ENCODE measurements at regions of chr6 and their contacts with region 1.

Region 1: DNA sequence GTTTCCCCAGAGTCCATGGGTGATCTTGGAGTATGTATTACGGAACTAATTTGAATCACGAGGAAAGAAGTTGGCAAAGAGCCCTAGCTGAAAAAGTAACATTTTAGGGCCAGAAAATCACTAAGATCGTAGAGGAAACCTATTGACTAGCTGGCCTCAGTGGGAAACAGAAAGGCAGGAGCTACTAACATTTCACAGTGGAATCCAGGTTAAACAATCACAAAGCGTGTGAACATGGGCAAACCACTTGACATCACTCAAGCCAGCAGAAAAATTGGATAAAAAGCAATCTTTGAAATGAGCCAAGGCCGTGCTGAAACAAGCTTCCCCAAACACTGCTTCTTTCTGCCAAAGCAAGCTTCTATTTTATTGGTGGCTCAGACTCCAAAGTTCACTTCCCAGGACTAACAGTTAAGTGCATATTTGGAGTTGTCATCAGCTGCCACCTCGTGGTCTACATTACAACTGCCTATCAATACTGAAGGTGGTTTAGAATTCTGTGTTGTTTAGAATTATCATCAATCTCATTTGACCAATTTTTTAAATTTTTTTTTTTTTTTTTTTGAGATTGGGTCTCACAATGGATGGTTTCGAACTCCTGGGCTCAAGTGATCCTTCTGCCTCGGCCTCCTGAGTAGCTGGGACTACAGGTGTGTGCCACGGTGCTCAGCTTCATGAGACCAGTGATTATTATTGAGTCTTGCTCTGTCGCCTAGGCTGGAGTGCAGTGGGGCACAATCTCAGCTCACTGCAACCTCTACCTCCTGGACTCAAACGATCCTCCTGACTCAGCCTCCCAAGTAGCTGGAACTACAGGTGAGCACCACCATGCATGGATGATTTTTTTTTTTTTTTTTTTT is 10.6 kb downstream of the RPS10 start:
- DNase-seq: peak; percentile 62
- ATAC-seq: peak; percentile 71
- H3K4me3 Mint-ChIP-seq: no peak overlapping the region
- H3K27ac Mint-ChIP-seq: no peak overlapping the region
- H3K4me1 Mint-ChIP-seq: peaks cover 15% of the 10 kb centered on the region
- H3K27me3 Mint-ChIP-seq: no peaks in the 10 kb centered on the region

Region 2: DNA sequence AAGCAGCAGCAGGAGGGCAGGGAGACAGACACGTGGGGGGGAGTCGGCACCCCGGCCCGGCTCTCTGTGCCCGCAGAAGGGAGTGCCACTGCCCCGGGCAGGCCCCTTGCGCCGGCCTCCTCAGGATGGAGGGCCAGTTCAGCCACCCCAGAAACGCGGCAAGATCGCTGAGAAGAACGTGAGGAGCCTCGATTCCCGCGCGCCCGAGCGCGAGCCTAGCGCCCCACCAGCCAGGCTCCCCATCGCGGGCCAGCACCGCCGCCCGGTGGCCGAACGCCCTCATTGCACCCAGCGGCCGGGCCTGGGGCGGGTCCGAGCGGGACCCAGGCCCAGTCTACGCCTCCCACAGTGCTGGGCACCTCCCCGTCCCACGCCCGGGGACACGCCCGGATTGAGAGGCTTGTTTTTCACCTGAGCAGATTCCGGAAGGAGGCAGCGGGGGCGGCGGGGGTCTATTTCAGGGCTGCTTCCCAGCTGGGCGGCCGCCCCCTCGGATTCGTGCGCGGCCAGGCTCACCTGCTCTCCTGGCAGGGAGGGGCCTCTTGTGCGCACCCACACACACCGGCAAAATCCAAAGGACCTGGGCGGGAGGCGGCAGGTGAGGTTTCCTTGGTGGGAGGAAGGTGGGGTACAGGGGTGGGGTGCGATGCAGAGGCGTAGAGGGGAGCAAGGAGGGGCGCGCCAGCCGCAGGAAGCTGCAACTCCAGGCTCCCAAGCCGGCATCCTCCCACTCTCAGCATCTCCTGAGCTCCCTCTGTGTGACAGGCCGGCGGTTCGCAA is 260.4 kb before region 1 on chr6:
- CTCF ChIA-PET with region 1: interaction called, 11 read pairs
- DNase-seq: peak; percentile 67
- ATAC-seq: peak; percentile 85
- H3K4me3 Mint-ChIP-seq: no peak overlapping the region
- H3K27ac Mint-ChIP-seq: no peak overlapping the region
- H3K4me1 Mint-ChIP-seq: peaks cover 4% of the 10 kb centered on the region
- H3K27me3 Mint-ChIP-seq: peaks cover 72% of the 10 kb centered on the region

Region 3: DNA sequence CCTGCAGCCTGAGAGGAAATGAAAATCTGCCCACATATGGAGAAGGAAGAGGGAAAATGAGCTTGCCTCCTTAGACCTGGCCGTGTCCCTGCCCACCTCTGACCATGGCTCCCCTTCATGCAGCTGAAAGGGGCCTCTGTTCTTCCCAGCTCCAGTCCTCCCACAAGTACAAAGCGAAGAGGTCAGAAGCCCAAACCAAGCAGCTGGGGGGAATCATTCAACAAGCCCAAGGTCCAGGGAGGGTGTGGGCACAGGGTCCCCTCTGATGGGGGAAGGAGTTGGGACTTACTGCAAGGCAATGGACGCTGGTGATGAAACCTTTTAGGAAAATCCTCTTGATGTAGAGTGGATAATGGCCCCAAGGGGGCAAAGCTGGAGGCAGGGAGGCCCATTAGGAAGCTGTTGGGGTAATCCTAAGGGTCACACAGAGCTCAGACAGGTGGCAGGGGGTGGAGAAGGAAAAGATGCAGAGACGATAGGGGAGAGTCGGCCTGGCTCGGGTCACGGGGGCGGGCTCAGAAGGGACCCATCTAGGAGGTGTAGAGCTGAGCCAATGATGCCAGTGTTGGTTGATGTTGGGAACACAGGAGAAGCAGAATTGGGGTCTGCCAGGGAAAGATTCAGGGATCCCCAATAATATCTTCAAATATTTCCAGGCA is 253.2 kb before region 1 on chr6:
- CTCF ChIA-PET with region 1: interaction called, 19 read pairs
- DNase-seq: no peak
- ATAC-seq: no peak
- H3K4me3 Mint-ChIP-seq: no peak overlapping the region
- H3K27ac Mint-ChIP-seq: no peak overlapping the region
- H3K4me1 Mint-ChIP-seq: peaks cover 2% of the 10 kb centered on the region
- H3K27me3 Mint-ChIP-seq: peaks cover 33% of the 10 kb centered on the region

Region 4: DNA sequence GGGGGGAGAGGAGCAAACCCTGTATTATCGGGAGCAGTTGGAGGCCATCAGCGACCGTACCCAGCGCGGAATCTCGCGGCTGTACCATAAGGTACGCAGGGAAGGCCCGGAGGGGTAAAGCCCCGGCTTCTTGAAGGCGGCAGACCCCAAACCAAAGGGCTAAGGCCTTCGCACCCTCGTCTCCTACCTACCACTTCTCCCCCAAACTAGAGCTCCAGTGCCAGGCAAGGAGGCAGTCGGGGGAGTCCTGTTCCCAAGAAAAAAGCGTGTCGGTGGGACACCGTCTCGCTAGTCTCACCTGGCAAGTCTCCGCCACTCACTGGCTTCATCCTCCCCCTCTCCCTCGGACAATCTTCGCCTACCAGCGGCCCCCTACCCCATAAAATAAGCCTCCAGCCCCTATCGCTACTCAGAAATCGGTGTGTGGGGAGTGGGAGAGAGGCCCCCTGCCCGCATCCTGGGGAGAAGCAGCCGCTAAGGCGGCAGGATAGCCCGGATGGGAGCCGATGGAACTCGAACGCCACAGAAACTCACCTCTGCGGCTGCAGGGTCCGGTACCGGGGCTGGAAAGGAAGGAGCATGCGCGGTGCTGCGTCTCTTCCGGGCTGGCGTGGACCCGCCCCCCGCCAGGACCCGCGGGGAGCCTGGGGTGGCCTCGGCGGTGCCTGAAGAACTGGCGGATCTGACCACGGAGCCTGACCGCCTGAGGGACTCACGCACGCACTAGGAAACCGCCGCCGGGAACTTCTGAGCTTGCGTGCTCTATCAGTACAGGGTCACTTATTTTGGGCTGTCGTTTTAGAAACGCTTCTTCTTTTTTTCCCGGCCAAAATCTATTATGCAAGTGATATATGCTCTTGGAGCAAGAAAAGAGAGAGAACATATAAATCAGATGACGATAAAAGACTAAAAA is 10.5 kb after region 1 on chr6 and contains the start of gene RPS10:
- CTCF ChIA-PET with region 1: interaction called, 23 read pairs
- DNase-seq: peak; percentile 93
- ATAC-seq: peak; percentile 94
- H3K4me3 Mint-ChIP-seq: peak within 1 kb of the TSS; percentile 95
- H3K27ac Mint-ChIP-seq: peak within 1 kb of the TSS; percentile 98
- H3K4me1 Mint-ChIP-seq: peaks cover 37% of the 10 kb centered on the region
- H3K27me3 Mint-ChIP-seq: peaks cover 7% of the 10 kb centered on the region
- total RNA-seq, gene RPS10: 1,124 to 1,323 TPM

Measured in activated CD8-positive, alpha-beta memory T cell treated with anti-CD3 and anti-CD28 coated beads, Interleukin-2, amount 10 ng/mL, durations not matched to agents 7 days and 5 days (primary cell).